Transverse colon (tissue), 4 donors: ENCODE measurements at regions of chr4 and their contacts with region 1.

Region 1: GRCh38 chr4:61177367-61177766 is 22.8 kb upstream of the ADGRL3 start:
- DNase-seq: no peak
- H3K4me3 ChIP-seq: no peak overlapping the region
- H3K27ac ChIP-seq: no peak overlapping the region
- H3K4me1 ChIP-seq: no peaks in the 10 kb centered on the region
- H3K27me3 ChIP-seq: no peaks in the 10 kb centered on the region
- CTCF ChIP-seq: no peak
- EP300 ChIP-seq: no peak
- POLR2A ChIP-seq: no peak

Region 2: GRCh38 chr4:60759518-60760245 is 417.7 kb before region 1 on chr4:
- in situ Hi-C with region 1: no loop called
- intact Hi-C with region 1: no loop called
- DNase-seq: no peak
- H3K4me3 ChIP-seq: no peak overlapping the region
- H3K27ac ChIP-seq: no peak overlapping the region
- H3K4me1 ChIP-seq: no peaks in the 10 kb centered on the region
- H3K27me3 ChIP-seq: no peaks in the 10 kb centered on the region
- CTCF ChIP-seq: peak in 1 of 5 experiments; percentile 8
- EP300 ChIP-seq: no peak
- POLR2A ChIP-seq: no peak

Region 3: DNA sequence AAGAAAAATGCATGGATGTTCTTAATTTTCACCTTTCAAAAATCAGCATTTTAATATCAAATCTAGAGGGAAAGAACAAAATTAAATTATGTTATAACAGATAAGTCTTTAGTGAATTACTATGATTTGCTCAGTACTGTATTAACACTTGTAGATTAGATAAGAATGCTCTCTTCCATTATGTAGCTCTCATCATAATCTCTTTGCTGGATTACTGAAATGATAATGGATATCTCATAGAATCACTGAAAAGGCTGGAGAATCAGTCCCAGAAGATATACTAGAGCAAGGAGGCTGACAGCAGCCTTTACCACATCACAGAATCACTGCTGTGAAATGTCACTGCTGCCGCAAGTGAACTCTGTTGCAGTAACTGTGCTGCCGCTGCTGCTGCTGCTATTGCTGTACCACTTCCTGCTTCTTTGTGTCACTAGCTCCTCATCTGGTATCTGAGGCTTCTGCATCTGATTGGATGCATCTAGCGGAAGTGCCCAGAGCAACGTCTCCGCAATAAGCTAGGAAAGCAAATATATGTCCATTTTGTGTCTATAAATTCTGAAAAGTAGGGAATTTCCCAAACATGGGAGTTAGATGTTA is 761.0 kb after region 1 on chr4:
- in situ Hi-C with region 1: no loop called
- intact Hi-C with region 1: loop called (anchors 5 kb)
- DNase-seq: no peak
- H3K4me3 ChIP-seq: no peak overlapping the region
- H3K27ac ChIP-seq: no peak overlapping the region
- H3K4me1 ChIP-seq: no peaks in the 10 kb centered on the region
- H3K27me3 ChIP-seq: no peaks in the 10 kb centered on the region
- CTCF ChIP-seq: no peak
- EP300 ChIP-seq: no peak
- POLR2A ChIP-seq: no peak